CD8-positive, alpha-beta T cell (primary cell): ENCODE measurements at regions of chr9 and their contacts with region 1.

Region 1: DNA sequence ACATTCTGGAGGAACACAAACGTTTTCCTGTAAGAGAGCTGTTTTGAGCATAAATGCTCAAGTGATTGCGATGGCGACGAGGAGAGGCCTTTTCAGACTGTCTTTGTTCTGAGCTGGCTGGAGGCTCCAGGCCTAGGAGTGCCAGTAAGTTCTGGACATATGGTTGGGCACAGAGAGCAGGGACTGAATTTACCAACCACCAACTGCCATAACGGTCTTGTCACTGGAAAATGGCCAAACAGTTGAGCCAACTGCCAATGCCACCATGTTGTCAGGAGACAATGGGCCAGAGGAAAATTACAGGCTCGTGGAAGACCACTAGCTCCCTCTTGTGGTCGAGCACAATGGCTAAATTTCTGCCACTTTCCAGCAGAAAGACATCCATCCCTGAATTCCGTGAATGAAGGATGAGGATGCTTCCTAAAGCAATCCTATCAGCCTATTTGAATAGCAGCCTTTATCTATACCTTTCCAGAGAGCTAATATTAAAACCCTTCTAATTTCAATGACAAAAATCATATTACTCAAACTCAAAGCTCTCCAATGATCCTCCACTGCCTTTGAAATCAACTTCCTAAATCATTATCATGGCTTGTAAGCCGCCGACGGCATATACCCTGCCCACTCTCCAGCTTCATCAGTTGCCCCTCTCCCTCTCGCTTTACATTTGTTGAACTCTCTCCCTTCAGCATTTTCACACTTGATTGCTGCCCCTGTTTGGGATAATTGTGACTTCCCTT is 66.9 kb upstream of the GLIS3 start:
- DNase-seq: peak in 7 of 9 experiments; percentile 3 to 57 (median 38)
- ATAC-seq: no peak
- H3K4me3 ChIP-seq: no peak overlapping the region
- H3K4me3 Mint-ChIP-seq: no peak overlapping the region
- H3K27ac ChIP-seq: no peak overlapping the region
- H3K27ac Mint-ChIP-seq: no peak overlapping the region
- H3K4me1 ChIP-seq: no peaks in the 10 kb centered on the region
- H3K4me1 Mint-ChIP-seq: no peaks in the 10 kb centered on the region
- H3K27me3 ChIP-seq: no peaks in the 10 kb centered on the region
- H3K27me3 Mint-ChIP-seq: peaks cover 3% of the 10 kb centered on the region
- CTCF ChIP-seq: peak; percentile 64

Region 2: GRCh38 chr9:2857564-2858198 is 1509.1 kb before region 1 on chr9:
- CTCF ChIA-PET with region 1: interaction called, 5 read pairs
- POLR2A ChIA-PET with region 1: no interaction called
- intact Hi-C with region 1: loop called (anchors 1 to 2 kb)
- DNase-seq: peak; percentile 28 to 75 (median 60)
- ATAC-seq: peak; percentile 62
- H3K4me3 ChIP-seq: no peak overlapping the region
- H3K4me3 Mint-ChIP-seq: no peak overlapping the region
- H3K27ac ChIP-seq: no peak overlapping the region
- H3K27ac Mint-ChIP-seq: no peak overlapping the region
- H3K4me1 ChIP-seq: no peaks in the 10 kb centered on the region
- H3K4me1 Mint-ChIP-seq: peaks cover 3% of the 10 kb centered on the region
- H3K27me3 ChIP-seq: peaks cover 0 to 3% of the 10 kb centered on the region in 2 experiments
- H3K27me3 Mint-ChIP-seq: peaks cover 40% of the 10 kb centered on the region
- CTCF ChIP-seq: peak; percentile 88

Region 3: GRCh38 chr9:3732077-3733038 is 634.4 kb before region 1 on chr9:
- CTCF ChIA-PET with region 1: interaction called, 9 read pairs
- POLR2A ChIA-PET with region 1: no interaction called
- intact Hi-C with region 1: loop called (anchors 1 kb)
- DNase-seq: peak in 6 of 9 experiments; percentile 1 to 67 (median 18)
- ATAC-seq: peak; percentile 97
- H3K4me3 ChIP-seq: no peak overlapping the region
- H3K4me3 Mint-ChIP-seq: peak overlapping the region; percentile 42
- H3K27ac ChIP-seq: no peak overlapping the region
- H3K27ac Mint-ChIP-seq: no peak overlapping the region
- H3K4me1 ChIP-seq: no peaks in the 10 kb centered on the region
- H3K4me1 Mint-ChIP-seq: peaks cover 12% of the 10 kb centered on the region
- H3K27me3 ChIP-seq: no peaks in the 10 kb centered on the region
- H3K27me3 Mint-ChIP-seq: peaks cover 2% of the 10 kb centered on the region
- CTCF ChIP-seq: peak; percentile 52

Region 4: GRCh38 chr9:4289411-4290380 is 77.1 kb before region 1 on chr9:
- CTCF ChIA-PET with region 1: no interaction called
- POLR2A ChIA-PET with region 1: no interaction called
- intact Hi-C with region 1: no loop called
- DNase-seq: no peak
- ATAC-seq: no peak
- H3K4me3 ChIP-seq: no peak overlapping the region
- H3K4me3 Mint-ChIP-seq: no peak overlapping the region
- H3K27ac ChIP-seq: no peak overlapping the region
- H3K27ac Mint-ChIP-seq: no peak overlapping the region
- H3K4me1 ChIP-seq: no peaks in the 10 kb centered on the region
- H3K4me1 Mint-ChIP-seq: no peaks in the 10 kb centered on the region
- H3K27me3 ChIP-seq: no peaks in the 10 kb centered on the region
- H3K27me3 Mint-ChIP-seq: peaks cover 17% of the 10 kb centered on the region
- CTCF ChIP-seq: no peak

Region 5: GRCh38 chr9:4339357-4339756 is 27.4 kb before region 1 on chr9:
- CTCF ChIA-PET with region 1: interaction called, 21 read pairs
- POLR2A ChIA-PET with region 1: interaction called, 3 read pairs
- intact Hi-C with region 1: loop called in 1 of 2 experiments (anchors 2 kb)
- DNase-seq: peak; percentile 61 to 88 (median 80)
- ATAC-seq: peak; percentile 92
- H3K4me3 ChIP-seq: no peak overlapping the region
- H3K4me3 Mint-ChIP-seq: peak overlapping the region; percentile 17
- H3K27ac ChIP-seq: no peak overlapping the region
- H3K27ac Mint-ChIP-seq: peak overlapping the region; percentile 50
- H3K4me1 ChIP-seq: peaks cover 3% of the 10 kb centered on the region
- H3K4me1 Mint-ChIP-seq: peaks cover 11% of the 10 kb centered on the region
- H3K27me3 ChIP-seq: no peaks in the 10 kb centered on the region
- H3K27me3 Mint-ChIP-seq: no peaks in the 10 kb centered on the region
- CTCF ChIP-seq: peak; percentile 70

Region 6: GRCh38 chr9:4382722-4383317 is 16.1 kb after region 1 on chr9:
- CTCF ChIA-PET with region 1: interaction called, 11 read pairs
- POLR2A ChIA-PET with region 1: no interaction called
- intact Hi-C with region 1: no loop called
- DNase-seq: peak in 3 of 9 experiments; percentile 20 to 60 (median 45)
- ATAC-seq: peak; percentile 42
- H3K4me3 ChIP-seq: no peak overlapping the region
- H3K4me3 Mint-ChIP-seq: no peak overlapping the region
- H3K27ac ChIP-seq: no peak overlapping the region
- H3K27ac Mint-ChIP-seq: no peak overlapping the region
- H3K4me1 ChIP-seq: no peaks in the 10 kb centered on the region
- H3K4me1 Mint-ChIP-seq: peaks cover 3% of the 10 kb centered on the region
- H3K27me3 ChIP-seq: peaks cover 0 to 2% of the 10 kb centered on the region in 2 experiments
- H3K27me3 Mint-ChIP-seq: no peaks in the 10 kb centered on the region
- CTCF ChIP-seq: peak; percentile 53